Activated B cell treated with CpG ODN at 0.5 μM for 24 hours (primary cell): ENCODE measurements at regions of chr3 and their contacts with region 1.

Region 1: DNA sequence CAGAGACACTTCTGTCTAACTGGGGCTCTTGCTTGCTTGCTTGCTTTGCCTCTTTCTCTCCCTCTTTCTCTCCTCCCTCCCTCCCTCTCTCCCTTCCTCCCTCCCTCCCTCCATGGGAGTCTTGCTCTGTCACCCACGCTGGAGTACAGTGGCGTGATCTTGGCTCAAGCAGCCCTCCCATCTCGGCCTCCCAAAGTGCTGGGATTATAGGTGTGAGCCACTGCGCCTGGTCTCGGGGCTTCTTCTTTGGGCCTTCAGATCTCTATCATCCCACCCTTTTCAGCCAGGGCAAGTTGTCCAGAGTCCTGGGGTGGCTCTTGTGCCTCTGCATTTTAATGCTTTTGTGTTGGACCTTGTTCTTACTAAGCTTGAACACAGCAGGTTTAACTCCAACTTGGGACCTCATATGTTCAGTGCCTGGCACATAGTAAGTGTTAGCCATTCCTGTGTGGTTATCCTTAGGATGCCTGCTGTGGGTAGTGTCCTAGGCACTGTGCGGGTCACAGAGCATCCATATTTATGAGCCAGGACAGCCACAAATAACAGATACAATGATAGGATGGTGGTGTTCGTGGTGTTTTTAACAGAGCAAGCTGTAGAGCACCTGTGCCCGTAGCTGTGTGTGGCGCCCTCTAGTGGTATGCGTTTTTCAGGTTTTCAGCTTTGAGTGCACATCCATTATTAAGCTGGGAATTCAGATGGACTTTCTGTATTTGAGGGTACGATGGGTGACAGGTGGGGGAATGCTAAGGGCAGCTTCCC is 75.1 kb downstream of the CCK start:
- DNase-seq: peak; percentile 40
- ATAC-seq: peak; percentile 52
- H3K4me3 Mint-ChIP-seq: peak overlapping the region; percentile 28
- H3K27ac Mint-ChIP-seq: peak overlapping the region; percentile 63
- H3K4me1 Mint-ChIP-seq: peaks cover 44% of the 10 kb centered on the region
- H3K27me3 Mint-ChIP-seq: no peaks in the 10 kb centered on the region
- CTCF ChIP-seq: peak; percentile 51

Region 2: DNA sequence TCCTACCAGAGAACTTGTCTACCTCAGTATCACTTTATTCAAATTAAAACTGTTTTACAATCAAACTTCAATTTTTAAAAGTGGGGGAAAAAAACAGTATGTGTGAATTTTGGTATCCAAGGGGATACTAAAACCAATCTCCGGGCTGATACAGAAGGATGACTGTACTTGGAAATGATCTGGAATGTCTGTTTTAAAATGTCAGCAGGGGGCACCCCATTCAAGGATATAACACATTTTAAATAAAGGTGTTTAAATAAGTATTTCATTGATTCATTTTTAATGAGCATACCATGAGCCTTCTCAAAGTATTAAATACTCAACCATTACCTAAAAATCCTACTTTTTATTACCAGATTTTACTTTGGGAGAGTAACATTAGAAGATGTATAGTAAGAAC is 296.9 kb before region 1 on chr3:
- CTCF ChIA-PET with region 1: interaction called, 43 read pairs
- POLR2A ChIA-PET with region 1: no interaction called
- intact Hi-C with region 1: loop called (anchors 1 kb)
- DNase-seq: no peak
- ATAC-seq: no peak
- H3K4me3 Mint-ChIP-seq: no peak overlapping the region
- H3K27ac Mint-ChIP-seq: no peak overlapping the region
- H3K4me1 Mint-ChIP-seq: no peaks in the 10 kb centered on the region
- H3K27me3 Mint-ChIP-seq: no peaks in the 10 kb centered on the region
- CTCF ChIP-seq: no peak

Region 3: GRCh38 chr3:42043027-42043796 is 147.7 kb before region 1 on chr3:
- CTCF ChIA-PET with region 1: no interaction called
- POLR2A ChIA-PET with region 1: no interaction called
- intact Hi-C with region 1: no loop called
- DNase-seq: no peak
- ATAC-seq: peak; percentile 22
- H3K4me3 Mint-ChIP-seq: no peak overlapping the region
- H3K27ac Mint-ChIP-seq: peak overlapping the region; percentile 68
- H3K4me1 Mint-ChIP-seq: peaks cover 84% of the 10 kb centered on the region
- H3K27me3 Mint-ChIP-seq: no peaks in the 10 kb centered on the region
- CTCF ChIP-seq: no peak

Region 4: GRCh38 chr3:42118762-42119361 is 72.0 kb before region 1 on chr3:
- CTCF ChIA-PET with region 1: interaction called, 107 read pairs
- POLR2A ChIA-PET with region 1: no interaction called
- intact Hi-C with region 1: loop called (anchors 1 kb)
- DNase-seq: no peak
- ATAC-seq: peak; percentile 82
- H3K4me3 Mint-ChIP-seq: no peak overlapping the region
- H3K27ac Mint-ChIP-seq: peak overlapping the region; percentile 4
- H3K4me1 Mint-ChIP-seq: peaks cover 92% of the 10 kb centered on the region
- H3K27me3 Mint-ChIP-seq: no peaks in the 10 kb centered on the region
- CTCF ChIP-seq: no peak

Region 5: GRCh38 chr3:42173307-42173706 is 17.6 kb before region 1 on chr3:
- CTCF ChIA-PET with region 1: interaction called, 26 read pairs
- POLR2A ChIA-PET with region 1: interaction called, 3 read pairs
- intact Hi-C with region 1: loop called (anchors 2 kb)
- DNase-seq: no peak
- ATAC-seq: peak; percentile 36
- H3K4me3 Mint-ChIP-seq: peak overlapping the region; percentile 49
- H3K27ac Mint-ChIP-seq: peak overlapping the region; percentile 79
- H3K4me1 Mint-ChIP-seq: peaks cover 77% of the 10 kb centered on the region
- H3K27me3 Mint-ChIP-seq: no peaks in the 10 kb centered on the region
- CTCF ChIP-seq: no peak

Region 6: GRCh38 chr3:42179110-42179725 is 11.7 kb before region 1 on chr3:
- CTCF ChIA-PET with region 1: interaction called, 20 read pairs
- POLR2A ChIA-PET with region 1: no interaction called
- intact Hi-C with region 1: no loop called
- DNase-seq: no peak
- ATAC-seq: no peak
- H3K4me3 Mint-ChIP-seq: no peak overlapping the region
- H3K27ac Mint-ChIP-seq: peak overlapping the region; percentile 27
- H3K4me1 Mint-ChIP-seq: peaks cover 27% of the 10 kb centered on the region
- H3K27me3 Mint-ChIP-seq: no peaks in the 10 kb centered on the region
- CTCF ChIP-seq: no peak

Region 7: GRCh38 chr3:42205800-42206514 is 15.1 kb after region 1 on chr3:
- CTCF ChIA-PET with region 1: interaction called, 10 read pairs
- POLR2A ChIA-PET with region 1: no interaction called
- intact Hi-C with region 1: no loop called
- DNase-seq: no peak
- ATAC-seq: no peak
- H3K4me3 Mint-ChIP-seq: no peak overlapping the region
- H3K27ac Mint-ChIP-seq: no peak overlapping the region
- H3K4me1 Mint-ChIP-seq: no peaks in the 10 kb centered on the region
- H3K27me3 Mint-ChIP-seq: no peaks in the 10 kb centered on the region
- CTCF ChIP-seq: no peak

Region 8: GRCh38 chr3:42265059-42265991 is 74.4 kb after region 1 on chr3:
- CTCF ChIA-PET with region 1: no interaction called
- POLR2A ChIA-PET with region 1: no interaction called
- intact Hi-C with region 1: no loop called
- DNase-seq: no peak
- ATAC-seq: no peak
- H3K4me3 Mint-ChIP-seq: no peak overlapping the region
- H3K27ac Mint-ChIP-seq: no peak overlapping the region
- H3K4me1 Mint-ChIP-seq: peaks cover 10% of the 10 kb centered on the region
- H3K27me3 Mint-ChIP-seq: peaks cover 64% of the 10 kb centered on the region
- CTCF ChIP-seq: no peak